WTC11 (cell line): ENCODE measurements at regions of chr11 and their contacts with region 1.

Region 1: DNA sequence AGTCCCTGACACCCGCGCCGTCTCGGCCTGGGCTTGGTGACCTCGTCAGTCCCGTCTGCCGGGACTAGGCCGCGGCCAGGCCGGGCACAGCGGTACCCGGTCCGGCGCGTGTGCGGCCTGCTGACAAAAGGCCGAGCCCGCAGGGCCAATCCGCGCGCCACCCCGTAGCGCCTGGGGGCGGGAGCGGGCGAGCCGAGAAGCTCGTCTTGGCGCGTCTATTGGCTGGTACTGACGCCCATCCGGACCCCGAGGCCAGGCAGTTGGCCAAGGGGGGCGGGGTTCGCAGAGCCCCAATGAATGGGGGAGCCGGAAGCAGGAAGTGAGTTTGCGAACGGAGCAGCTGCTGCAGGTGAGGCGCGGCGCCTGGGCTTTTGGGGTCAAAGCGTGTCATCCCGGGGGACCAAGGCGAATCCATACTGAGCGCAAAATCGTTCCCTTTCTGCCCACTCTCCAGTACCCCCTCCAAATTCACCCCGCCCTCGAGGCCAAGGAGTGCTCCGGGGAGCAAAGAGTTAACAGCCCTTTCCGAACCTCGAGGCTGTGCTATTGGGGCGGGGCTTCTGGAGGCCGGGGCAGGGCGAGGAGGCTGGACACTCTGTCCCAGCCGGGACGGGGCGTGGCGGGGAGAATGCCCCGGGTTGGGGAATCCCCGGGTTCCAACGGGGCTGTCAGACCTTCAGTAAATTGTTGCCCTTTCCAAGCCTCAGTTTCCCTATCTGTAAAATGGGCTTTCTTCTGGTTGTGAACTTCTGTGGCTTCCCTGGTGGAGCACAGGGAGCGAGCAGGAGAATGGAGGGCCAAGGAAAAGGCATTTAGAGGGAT is at the start of gene DPP3:
- DNase-seq: peak; percentile 99
- ATAC-seq: peak; percentile 90
- H3K4me3 Mint-ChIP-seq: peak within 1 kb of the TSS; percentile 95
- H3K27ac Mint-ChIP-seq: peak within 1 kb of the TSS; percentile 95
- H3K4me1 Mint-ChIP-seq: peaks cover 26% of the 10 kb centered on the region
- H3K27me3 Mint-ChIP-seq: no peaks in the 10 kb centered on the region
- CTCF ChIP-seq: no peak
- total RNA-seq, gene DPP3: 77.0 to 86.7 TPM (median 83.4 TPM) in 3 replicates

Region 2: GRCh38 chr11:66414120-66414934 is 66.0 kb before region 1 on chr11:
- CTCF ChIA-PET with region 1: interaction called, 56 read pairs
- POLR2A ChIA-PET with region 1: interaction called, 8 read pairs
- DNase-seq: peak; percentile 33
- ATAC-seq: peak; percentile 82
- H3K4me3 Mint-ChIP-seq: peak overlapping the region; percentile 39
- H3K27ac Mint-ChIP-seq: peak overlapping the region; percentile 78
- H3K4me1 Mint-ChIP-seq: peaks cover 46% of the 10 kb centered on the region
- H3K27me3 Mint-ChIP-seq: peaks cover 33% of the 10 kb centered on the region
- CTCF ChIP-seq: no peak

Region 3: DNA sequence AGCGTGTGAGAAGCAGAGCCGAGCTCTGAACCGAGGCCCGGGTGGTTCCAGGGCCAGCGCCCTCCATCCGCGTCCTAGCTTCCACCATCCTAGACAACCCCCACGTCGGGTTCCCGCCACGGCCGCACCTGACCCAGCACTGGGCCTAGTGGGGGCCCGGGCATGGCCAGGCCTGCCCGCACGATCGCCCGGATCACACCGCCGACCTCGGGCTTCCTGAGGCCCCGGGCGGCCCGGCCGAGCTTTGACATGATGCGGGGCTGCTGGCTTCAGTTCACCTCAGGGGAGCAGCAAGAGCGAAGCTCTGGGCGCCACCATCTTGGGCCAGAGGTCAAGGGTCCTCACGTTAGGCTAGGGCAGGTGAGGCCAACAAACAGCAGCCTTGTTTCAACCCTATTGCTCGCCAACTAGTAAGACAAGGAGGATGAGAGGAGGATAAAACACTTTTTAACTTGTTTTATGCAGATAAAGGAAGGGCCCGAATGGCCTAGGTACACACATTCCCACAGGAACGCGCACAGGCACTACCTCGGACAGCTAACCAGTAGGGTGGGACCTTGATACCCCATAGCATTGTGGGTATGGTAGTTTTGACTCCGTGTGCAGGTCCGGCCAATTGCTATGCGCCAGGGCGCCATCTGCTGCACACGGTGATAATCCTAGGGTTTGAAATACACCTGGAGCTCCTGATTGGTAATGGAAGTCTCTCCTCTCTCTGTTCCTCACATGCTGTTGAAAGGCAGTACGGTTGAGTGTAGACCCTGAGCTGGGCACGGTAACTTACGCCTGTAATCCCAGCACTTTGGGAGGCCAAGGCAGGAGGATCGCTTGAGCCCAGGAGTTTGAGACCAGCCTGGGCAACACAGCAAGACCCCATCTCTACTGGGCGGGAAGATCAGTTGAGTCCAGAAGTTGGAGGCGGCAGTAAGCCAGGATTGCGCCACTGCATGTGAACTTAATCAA is 41.5 kb before region 1 on chr11 and contains the start of gene MRPL11:
- CTCF ChIA-PET with region 1: interaction called, 20 read pairs
- POLR2A ChIA-PET with region 1: interaction called, 12 read pairs
- DNase-seq: peak; percentile 95
- ATAC-seq: peak; percentile 98
- H3K4me3 Mint-ChIP-seq: peak within 1 kb of the TSS; percentile 95
- H3K27ac Mint-ChIP-seq: peak within 1 kb of the TSS; percentile 99
- H3K4me1 Mint-ChIP-seq: peaks cover 10% of the 10 kb centered on the region
- H3K27me3 Mint-ChIP-seq: peaks cover 7% of the 10 kb centered on the region
- CTCF ChIP-seq: no peak; the same call in 1 of the 2 replicates
- total RNA-seq, gene MRPL11: 131 to 137 TPM (median 135 TPM) in 3 replicates

Region 4: GRCh38 chr11:66491315-66491935 is 11.1 kb after region 1 on chr11:
- CTCF ChIA-PET with region 1: interaction called, 43 read pairs
- POLR2A ChIA-PET with region 1: interaction called, 5 read pairs
- DNase-seq: peak; percentile 74
- ATAC-seq: peak; percentile 96
- H3K4me3 Mint-ChIP-seq: no peak overlapping the region
- H3K27ac Mint-ChIP-seq: 0 out of 2 replicates have a peak overlapping the region, but pooled peaks have one; percentile 15
- H3K4me1 Mint-ChIP-seq: peaks cover 6% of the 10 kb centered on the region
- H3K27me3 Mint-ChIP-seq: no peaks in the 10 kb centered on the region
- CTCF ChIP-seq: peak; percentile 75

Region 5: GRCh38 chr11:66600631-66601233 is 120.4 kb after region 1 on chr11:
- CTCF ChIA-PET with region 1: no interaction called
- POLR2A ChIA-PET with region 1: no interaction called
- DNase-seq: no peak
- ATAC-seq: no peak
- H3K4me3 Mint-ChIP-seq: no peak overlapping the region
- H3K27ac Mint-ChIP-seq: no peak overlapping the region
- H3K4me1 Mint-ChIP-seq: no peaks in the 10 kb centered on the region
- H3K27me3 Mint-ChIP-seq: no peaks in the 10 kb centered on the region
- CTCF ChIP-seq: no peak